Activated B cell treated with CpG ODN at 0.5 μM for 24 hours (primary cell): ENCODE measurements at regions of chr1 and their contacts with region 1.

Region 1: DNA sequence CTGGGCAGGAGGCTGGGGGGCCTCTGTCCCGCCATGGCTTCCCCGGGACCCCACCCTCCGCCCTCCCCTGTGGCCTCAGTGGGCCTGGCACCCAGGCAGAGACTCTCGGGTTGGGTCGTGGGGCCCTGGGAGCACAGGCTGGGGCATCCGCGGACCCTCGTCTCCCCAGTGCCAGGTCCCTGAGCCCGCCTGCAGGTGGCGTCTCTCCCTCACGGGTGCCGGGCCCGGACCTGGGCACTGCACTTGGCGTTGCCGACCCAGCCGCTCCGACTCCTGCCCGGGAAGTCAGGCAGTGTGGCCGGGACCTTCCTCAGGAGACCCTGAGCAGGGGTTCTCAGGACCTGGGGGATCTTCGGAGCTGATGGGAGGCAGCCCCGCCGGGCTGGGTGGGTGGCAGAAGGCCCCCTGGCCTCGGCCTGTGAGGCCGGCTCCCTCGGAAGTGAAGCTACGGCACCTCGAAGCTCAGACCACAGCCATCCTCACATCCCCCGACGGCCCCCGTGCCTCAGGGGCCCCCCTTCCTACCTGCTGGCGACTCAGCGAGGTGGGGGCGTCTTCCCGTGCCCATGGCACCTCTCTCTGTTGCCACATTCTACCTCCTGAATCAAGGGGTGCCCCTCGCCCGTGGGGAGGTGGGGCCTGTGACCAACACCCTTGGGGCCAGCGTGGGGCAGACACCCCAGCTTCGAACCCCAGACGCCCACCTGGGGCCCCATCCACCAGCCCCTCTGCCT is 6.4 kb upstream of the C1orf159 start:
- DNase-seq: peak; percentile 83
- ATAC-seq: peak; percentile 97
- H3K4me3 Mint-ChIP-seq: peak overlapping the region; percentile 24
- H3K27ac Mint-ChIP-seq: no peak overlapping the region
- H3K4me1 Mint-ChIP-seq: peaks cover 21% of the 10 kb centered on the region
- H3K27me3 Mint-ChIP-seq: peaks cover 5% of the 10 kb centered on the region
- CTCF ChIP-seq: peak; percentile 35

Region 2: DNA sequence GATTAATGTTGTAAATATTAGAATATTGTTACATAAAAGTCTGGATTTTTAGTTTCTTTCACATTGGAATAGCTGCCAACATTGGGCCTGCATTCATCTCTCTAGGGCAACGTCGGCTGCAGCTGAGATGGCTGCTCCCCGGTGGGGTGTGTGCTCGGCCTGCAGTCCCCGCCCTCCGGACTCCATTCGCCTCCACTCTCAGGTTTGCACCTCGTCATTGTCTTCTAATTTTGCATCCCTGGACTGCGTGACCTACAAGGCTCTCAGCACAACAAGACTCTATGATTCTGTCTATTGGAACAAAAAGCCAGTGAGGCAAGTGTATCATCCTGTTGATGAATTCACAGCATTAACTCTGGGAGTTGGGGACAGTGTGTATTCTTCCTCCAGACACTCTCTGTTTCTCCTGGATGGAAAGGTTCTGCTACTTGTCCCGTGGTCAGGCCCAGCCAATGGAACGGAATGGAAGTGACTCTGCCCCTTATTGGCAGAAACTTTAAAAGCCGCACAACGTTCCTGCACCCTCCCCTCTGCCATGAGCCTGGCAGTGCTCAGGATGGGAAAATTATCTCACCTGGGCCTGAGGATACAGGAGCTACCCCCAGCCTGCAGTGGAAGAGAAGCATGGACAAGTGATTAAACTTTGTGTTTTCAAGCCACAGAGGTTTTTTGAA is 303.5 kb before region 1 on chr1:
- CTCF ChIA-PET with region 1: no interaction called
- POLR2A ChIA-PET with region 1: no interaction called
- intact Hi-C with region 1: no loop called
- DNase-seq: no peak
- ATAC-seq: no peak
- H3K4me3 Mint-ChIP-seq: no peak overlapping the region
- H3K27ac Mint-ChIP-seq: no peak overlapping the region
- H3K4me1 Mint-ChIP-seq: peaks cover 11% of the 10 kb centered on the region
- H3K27me3 Mint-ChIP-seq: no peaks in the 10 kb centered on the region
- CTCF ChIP-seq: no peak

Region 3: DNA sequence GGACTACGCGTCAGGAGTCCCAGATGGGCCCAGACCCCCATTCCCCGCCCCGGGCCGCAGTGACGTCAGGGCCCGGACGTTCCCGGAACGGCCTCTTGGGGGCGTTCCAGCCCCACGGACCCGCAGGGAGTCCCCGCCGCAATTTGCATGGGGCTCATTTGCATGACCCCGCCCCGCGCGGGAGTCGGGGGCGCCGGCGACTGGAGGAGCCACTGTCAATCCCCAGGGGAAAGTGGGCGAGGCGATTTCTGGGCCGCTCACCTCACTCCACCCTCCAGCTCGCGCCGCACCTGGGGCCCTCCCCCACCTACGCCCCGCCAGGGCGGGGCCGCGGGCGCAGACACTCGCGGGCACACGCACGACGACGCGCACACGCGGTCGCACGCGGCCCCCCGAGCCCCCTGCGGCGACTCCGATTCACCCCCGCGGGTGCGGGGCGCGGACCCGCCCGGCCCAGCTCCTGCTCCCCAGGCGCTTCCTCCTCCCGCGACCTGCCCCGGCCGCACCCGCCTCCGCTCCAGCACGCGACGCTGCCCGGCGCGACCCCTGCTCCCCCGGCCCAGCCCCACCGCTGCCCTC is 89.1 kb before region 1 on chr1:
- CTCF ChIA-PET with region 1: interaction called, 10 read pairs
- POLR2A ChIA-PET with region 1: interaction called, 13 read pairs
- intact Hi-C with region 1: loop called (anchors 2 kb)
- DNase-seq: peak; percentile 97
- ATAC-seq: peak; percentile 96
- H3K4me3 Mint-ChIP-seq: peak overlapping the region; percentile 72
- H3K27ac Mint-ChIP-seq: peak overlapping the region; percentile 24
- H3K4me1 Mint-ChIP-seq: peaks cover 19% of the 10 kb centered on the region
- H3K27me3 Mint-ChIP-seq: no peaks in the 10 kb centered on the region
- CTCF ChIP-seq: peak; percentile 67

Region 4: GRCh38 chr1:1137256-1138045 is 15.2 kb after region 1 on chr1:
- CTCF ChIA-PET with region 1: interaction called, 10 read pairs
- POLR2A ChIA-PET with region 1: interaction called, 21 read pairs
- intact Hi-C with region 1: loop called (anchors 2 kb)
- DNase-seq: peak; percentile 78
- ATAC-seq: peak; percentile 75
- H3K4me3 Mint-ChIP-seq: peak overlapping the region; percentile 76
- H3K27ac Mint-ChIP-seq: peak overlapping the region; percentile 90
- H3K4me1 Mint-ChIP-seq: peaks cover 37% of the 10 kb centered on the region
- H3K27me3 Mint-ChIP-seq: no peaks in the 10 kb centered on the region
- CTCF ChIP-seq: no peak

Region 5: DNA sequence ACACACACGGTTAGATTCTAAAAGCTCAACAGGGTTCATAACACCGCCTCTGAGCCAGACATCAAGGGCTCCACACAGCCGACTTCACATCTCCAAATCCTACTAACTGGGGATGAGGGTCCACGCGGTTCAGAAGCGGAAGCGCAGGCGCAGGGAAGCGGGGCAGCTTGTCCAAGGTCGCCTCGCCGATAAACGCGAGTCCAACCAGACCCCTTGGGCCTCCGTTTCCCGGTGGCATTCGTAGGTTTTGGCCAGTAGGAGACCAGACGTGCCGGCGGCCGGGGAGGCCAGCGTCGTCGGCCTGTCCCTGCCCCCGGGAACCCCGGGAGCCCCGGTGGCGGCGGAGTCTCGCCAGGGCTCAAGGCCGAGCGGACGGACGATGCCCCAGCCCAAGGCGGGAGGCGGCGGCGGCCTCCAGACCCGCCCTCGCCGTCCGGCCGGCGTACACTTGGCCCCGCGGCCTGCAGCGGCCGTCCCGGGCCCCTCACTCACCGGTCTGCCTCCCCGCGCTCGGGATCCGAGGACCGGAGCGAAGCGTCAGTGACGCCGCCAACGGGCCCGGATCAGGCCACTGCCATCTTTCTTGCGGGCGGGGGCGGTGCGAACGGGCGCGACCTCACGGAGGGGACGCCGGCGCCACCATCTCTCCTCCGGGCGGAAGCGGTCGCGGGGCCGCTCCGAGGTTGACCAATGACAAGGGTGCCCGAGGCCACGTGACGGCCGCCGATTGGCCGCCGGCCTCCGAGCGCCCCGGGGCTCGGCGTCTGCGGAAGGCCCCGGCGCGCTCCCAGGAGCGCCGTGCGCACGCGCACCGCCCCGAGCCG is 109.4 kb after region 1 on chr1 and contains the start of gene SDF4:
- CTCF ChIA-PET with region 1: interaction called, 6 read pairs
- POLR2A ChIA-PET with region 1: interaction called, 16 read pairs
- intact Hi-C with region 1: no loop called
- DNase-seq: peak; percentile 91
- ATAC-seq: peak; percentile 94
- H3K4me3 Mint-ChIP-seq: peak within 1 kb of the TSS; percentile 92
- H3K27ac Mint-ChIP-seq: peak within 1 kb of the TSS; percentile 83
- H3K4me1 Mint-ChIP-seq: peaks cover 35% of the 10 kb centered on the region
- H3K27me3 Mint-ChIP-seq: no peaks in the 10 kb centered on the region
- CTCF ChIP-seq: no peak
- total RNA-seq, gene SDF4: 94.4 and 97.9 TPM in 2 replicates

Region 6: GRCh38 chr1:1237874-1238701 is 115.8 kb after region 1 on chr1:
- CTCF ChIA-PET with region 1: interaction called, 12 read pairs
- POLR2A ChIA-PET with region 1: interaction called, 6 read pairs
- intact Hi-C with region 1: no loop called
- DNase-seq: no peak
- ATAC-seq: peak; percentile 66
- H3K4me3 Mint-ChIP-seq: peak overlapping the region; percentile 32
- H3K27ac Mint-ChIP-seq: no peak overlapping the region
- H3K4me1 Mint-ChIP-seq: peaks cover 28% of the 10 kb centered on the region
- H3K27me3 Mint-ChIP-seq: no peaks in the 10 kb centered on the region
- CTCF ChIP-seq: no peak

Region 7: DNA sequence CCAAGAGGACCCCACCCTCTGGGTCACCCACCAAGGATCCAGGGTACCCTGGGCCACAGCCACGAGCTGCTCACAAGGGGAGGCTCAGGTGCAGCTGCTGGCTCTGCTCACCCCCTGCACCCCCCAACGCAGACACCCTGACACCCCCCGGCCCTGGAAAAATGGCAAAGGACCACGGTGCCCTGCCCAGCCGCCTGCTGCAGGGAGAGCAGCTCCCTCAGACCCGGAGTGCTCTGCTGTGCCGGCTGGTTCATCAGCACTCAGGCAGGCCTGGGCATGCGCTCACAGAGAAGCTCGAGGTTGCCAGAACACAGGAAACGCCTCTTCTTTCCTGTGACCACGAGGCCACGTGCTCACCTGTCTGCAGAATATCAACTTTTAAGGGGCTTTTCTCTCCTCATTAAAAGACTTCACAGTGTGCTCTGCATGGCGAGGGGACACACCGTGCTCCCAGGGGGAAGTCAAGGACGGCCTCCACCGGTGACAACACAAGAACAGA is 128.6 kb after region 1 on chr1:
- CTCF ChIA-PET with region 1: interaction called, 102 read pairs
- POLR2A ChIA-PET with region 1: interaction called, 33 read pairs
- intact Hi-C with region 1: loop called (anchors 1 kb)
- DNase-seq: no peak
- ATAC-seq: peak; percentile 76
- H3K4me3 Mint-ChIP-seq: peak overlapping the region; percentile 64
- H3K27ac Mint-ChIP-seq: peak overlapping the region; percentile 72
- H3K4me1 Mint-ChIP-seq: peaks cover 19% of the 10 kb centered on the region
- H3K27me3 Mint-ChIP-seq: no peaks in the 10 kb centered on the region
- CTCF ChIP-seq: no peak

Region 8: GRCh38 chr1:1291548-1292441 is 169.6 kb after region 1 on chr1:
- CTCF ChIA-PET with region 1: interaction called, 71 read pairs
- POLR2A ChIA-PET with region 1: interaction called, 11 read pairs
- intact Hi-C with region 1: loop called (anchors 1 kb)
- DNase-seq: peak; percentile 68
- ATAC-seq: peak; percentile 92
- H3K4me3 Mint-ChIP-seq: no peak overlapping the region
- H3K27ac Mint-ChIP-seq: no peak overlapping the region
- H3K4me1 Mint-ChIP-seq: peaks cover 10% of the 10 kb centered on the region
- H3K27me3 Mint-ChIP-seq: peaks cover 2% of the 10 kb centered on the region
- CTCF ChIP-seq: no peak